ENCODE measurements at regions of chr1 and their contacts with region 1.

Region 1: GRCh38 chr1:214551436-214552173 is at the start of gene PTPN14:
- DNase-seq: peak; percentile 90 to 93 (median 91)
- ATAC-seq: peak; percentile 78 to 91 (median 88)
- H3K4me3 ChIP-seq: peak within 1 kb of the TSS; percentile 74 to 94 (median 89)
- H3K27ac ChIP-seq: peak within 1 kb of the TSS; percentile 82 to 99 (median 98)
- H3K4me1 ChIP-seq: peaks cover 0 to 47% (median 35%) of the 10 kb centered on the region in 12 donors
- H3K27me3 ChIP-seq: peaks cover 0 to 20% (median 0%) of the 10 kb centered on the region in 9 donors
- CTCF ChIP-seq: peak in 7 of 12 donors; percentile 13 to 68 (median 48)
- POLR2A ChIP-seq: peak; percentile 13 to 60
- total RNA-seq, gene PTPN14: 25.3 to 52.0 (median 45.9) TPM

Region 2: DNA sequence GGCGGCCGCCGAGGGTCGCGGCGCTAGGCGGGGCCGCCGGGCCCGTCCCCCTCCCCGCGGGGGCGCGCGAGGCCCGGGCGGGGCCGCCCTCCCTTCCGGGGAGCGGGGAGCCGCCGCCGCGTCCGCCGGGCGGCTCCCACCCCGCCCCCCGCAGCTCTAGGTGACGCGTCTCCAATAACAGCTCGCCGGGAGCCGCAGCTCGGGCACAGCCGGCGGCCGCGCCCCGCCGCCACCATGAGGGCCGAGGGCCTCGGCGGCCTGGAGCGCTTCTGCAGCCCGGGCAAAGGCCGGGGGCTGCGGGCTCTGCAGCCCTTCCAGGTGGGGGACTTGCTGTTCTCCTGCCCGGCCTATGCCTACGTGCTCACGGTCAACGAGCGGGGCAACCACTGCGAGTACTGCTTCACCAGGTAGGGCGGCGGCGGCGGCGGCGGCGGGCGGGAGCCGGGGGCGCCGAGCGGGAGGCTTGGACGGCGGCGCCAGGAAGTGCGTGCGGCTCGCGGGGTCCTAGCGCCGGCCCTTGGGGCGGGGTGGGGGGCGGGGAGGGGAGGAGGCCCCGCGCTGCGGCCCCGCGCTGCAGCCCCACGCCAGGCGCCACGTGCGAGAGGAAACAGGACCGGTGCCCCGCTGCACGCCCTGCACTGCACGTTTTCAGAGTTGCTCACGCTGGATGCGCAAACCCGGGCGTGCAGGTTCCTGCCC is 270.4 kb before region 1 on chr1 and contains the start of gene SMYD2:
- intact Hi-C with region 1: loop called in 2 of 10 experiments (anchors 5 kb)
- DNase-seq: peak; percentile 80 to 90 (median 87)
- ATAC-seq: peak; percentile 16 to 84 (median 59)
- H3K4me3 ChIP-seq: peak within 1 kb of the TSS; percentile 58 to 98 (median 92)
- H3K27ac ChIP-seq: peak within 1 kb of the TSS; percentile 94 to 100 (median 98)
- H3K4me1 ChIP-seq: peaks cover 0 to 63% (median 34%) of the 10 kb centered on the region in 12 donors
- H3K27me3 ChIP-seq: no peaks in the 10 kb centered on the region
- CTCF ChIP-seq: no peak
- POLR2A ChIP-seq: peak; percentile 69 to 93
- total RNA-seq, gene SMYD2: 204 to 406 (median 342) TPM

Region 3: GRCh38 chr1:214386747-214387146 is 164.9 kb before region 1 on chr1:
- intact Hi-C with region 1: loop called in 1 of 10 experiments (anchors 10 kb)
- DNase-seq: no peak
- ATAC-seq: no peak
- H3K4me3 ChIP-seq: no peak overlapping the region
- H3K27ac ChIP-seq: no peak overlapping the region
- H3K4me1 ChIP-seq: no peaks in the 10 kb centered on the region
- H3K27me3 ChIP-seq: no peaks in the 10 kb centered on the region
- CTCF ChIP-seq: no peak
- POLR2A ChIP-seq: no peak

Region 4: DNA sequence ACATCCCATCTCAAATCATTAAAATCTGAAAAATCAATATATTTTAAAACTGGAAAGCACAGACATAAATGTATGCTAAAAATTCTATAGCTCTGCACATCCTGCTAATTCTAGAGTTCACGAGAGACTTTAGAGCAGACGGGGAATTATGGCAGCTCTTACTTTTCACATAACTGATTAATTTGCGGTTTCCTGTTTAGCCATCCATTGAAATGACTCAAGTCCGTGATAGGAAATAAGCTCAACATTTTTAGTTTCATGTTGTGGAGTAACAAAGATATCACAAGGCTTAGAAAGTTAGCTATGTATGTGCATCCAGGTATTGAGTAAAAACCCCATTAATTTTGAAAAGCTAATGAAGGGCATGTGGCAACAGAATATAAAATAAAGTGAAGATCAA is 147.5 kb before region 1 on chr1:
- intact Hi-C with region 1: loop called in 2 of 10 experiments (anchors 10 kb)
- DNase-seq: no peak
- ATAC-seq: no peak
- H3K4me3 ChIP-seq: no peak overlapping the region
- H3K27ac ChIP-seq: peak overlapping the region in 1 of 12 donors; percentile 8
- H3K4me1 ChIP-seq: peaks cover 0 to 21% (median 1%) of the 10 kb centered on the region in 12 donors
- H3K27me3 ChIP-seq: no peaks in the 10 kb centered on the region
- CTCF ChIP-seq: no peak
- POLR2A ChIP-seq: no peak

Region 5: GRCh38 chr1:214416417-214416816 is 135.2 kb before region 1 on chr1:
- intact Hi-C with region 1: loop called in 1 of 10 experiments (anchors 10 kb)
- DNase-seq: no peak
- ATAC-seq: peak in 3 of 4 donors; percentile 60 to 77 (median 66)
- H3K4me3 ChIP-seq: no peak overlapping the region
- H3K27ac ChIP-seq: peak overlapping the region in 10 of 12 donors; percentile 1 to 51 (median 30)
- H3K4me1 ChIP-seq: peaks cover 0 to 67% (median 46%) of the 10 kb centered on the region in 12 donors
- H3K27me3 ChIP-seq: no peaks in the 10 kb centered on the region
- CTCF ChIP-seq: no peak
- POLR2A ChIP-seq: no peak

Region 6: DNA sequence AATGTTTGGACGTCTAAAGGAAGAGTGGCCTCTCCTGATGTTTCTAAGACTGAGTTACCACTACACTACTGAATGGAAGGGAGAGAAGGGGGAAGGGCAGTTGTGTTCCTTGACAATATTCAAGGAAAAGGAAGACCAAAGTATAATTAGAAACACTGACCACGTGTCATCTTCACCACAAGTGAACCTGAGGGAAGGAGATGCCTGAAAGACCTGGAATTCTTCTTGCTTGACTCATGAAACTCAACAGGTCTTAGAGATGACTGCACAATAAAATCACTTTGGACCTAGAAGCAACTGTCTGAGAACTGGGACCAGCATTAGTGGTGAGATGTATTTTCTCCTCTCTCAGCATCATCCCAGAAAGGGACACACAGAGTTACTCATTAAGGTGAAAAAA is 56.9 kb before region 1 on chr1:
- intact Hi-C with region 1: loop called in 2 of 10 experiments (anchors 5 to 10 kb)
- DNase-seq: no peak
- ATAC-seq: no peak
- H3K4me3 ChIP-seq: no peak overlapping the region
- H3K27ac ChIP-seq: no peak overlapping the region
- H3K4me1 ChIP-seq: peaks cover 5 to 50% (median 18%) of the 10 kb centered on the region in 12 donors
- H3K27me3 ChIP-seq: no peaks in the 10 kb centered on the region
- CTCF ChIP-seq: no peak
- POLR2A ChIP-seq: no peak

Region 7: GRCh38 chr1:214566158-214567104 is 14.8 kb after region 1 on chr1:
- intact Hi-C with region 1: no loop called
- DNase-seq: peak in 1 of 5 donors; percentile 31
- ATAC-seq: peak in 1 of 4 donors; percentile 61
- H3K4me3 ChIP-seq: no peak overlapping the region
- H3K27ac ChIP-seq: no peak overlapping the region
- H3K4me1 ChIP-seq: peaks cover 0 to 13% (median 1%) of the 10 kb centered on the region in 12 donors
- H3K27me3 ChIP-seq: no peaks in the 10 kb centered on the region
- CTCF ChIP-seq: no peak
- POLR2A ChIP-seq: no peak

Region 8: DNA sequence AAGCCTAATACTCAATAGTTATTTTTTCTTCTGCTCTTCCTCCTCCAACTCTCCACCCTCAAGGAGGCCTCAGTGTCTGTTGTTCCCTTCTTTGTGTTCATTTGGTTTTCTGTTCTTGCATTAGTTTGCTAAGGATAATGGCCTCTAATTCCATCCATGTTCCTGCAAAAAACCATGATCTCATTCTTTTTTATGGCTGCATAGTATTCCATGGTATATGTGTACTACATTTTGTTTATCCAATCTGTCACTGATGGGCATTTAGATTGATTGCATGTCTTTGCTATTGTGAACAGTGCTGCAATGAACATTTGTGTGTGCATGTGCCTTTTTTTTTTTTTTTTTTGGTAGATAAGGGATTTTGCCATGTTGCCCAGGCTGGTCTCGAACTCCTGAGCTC is 58.1 kb after region 1 on chr1:
- intact Hi-C with region 1: no loop called
- DNase-seq: no peak
- ATAC-seq: no peak
- H3K4me3 ChIP-seq: no peak overlapping the region
- H3K27ac ChIP-seq: no peak overlapping the region
- H3K4me1 ChIP-seq: no peaks in the 10 kb centered on the region
- H3K27me3 ChIP-seq: no peaks in the 10 kb centered on the region
- CTCF ChIP-seq: no peak
- POLR2A ChIP-seq: no peak

Measured in heart left ventricle (tissue), 16 donors.